Activated naive CD4-positive, alpha-beta T cell treated with anti-CD3 and anti-CD28 coated beads, Interleukin-2, amount 10 ng/mL, durations not matched to agents 7 days and 5 days (primary cell): ENCODE measurements at regions of chr3 and their contacts with region 1.

Region 1: GRCh38 chr3:111338059-111338698 is 203.8 kb upstream of the CD96 start:
- DNase-seq: peak; percentile 64
- H3K4me3 Mint-ChIP-seq: no peak overlapping the region
- H3K27ac Mint-ChIP-seq: no peak overlapping the region
- H3K4me1 Mint-ChIP-seq: peaks cover 23% of the 10 kb centered on the region
- H3K27me3 Mint-ChIP-seq: no peaks in the 10 kb centered on the region

Region 2: GRCh38 chr3:111080413-111080812 is 257.8 kb before region 1 on chr3:
- CTCF ChIA-PET with region 1: interaction called, 12 read pairs
- DNase-seq: no peak
- H3K4me3 Mint-ChIP-seq: no peak overlapping the region
- H3K27ac Mint-ChIP-seq: no peak overlapping the region
- H3K4me1 Mint-ChIP-seq: no peaks in the 10 kb centered on the region
- H3K27me3 Mint-ChIP-seq: no peaks in the 10 kb centered on the region

Region 3: GRCh38 chr3:111277226-111277625 is 61.0 kb before region 1 on chr3:
- CTCF ChIA-PET with region 1: interaction called, 20 read pairs
- DNase-seq: no peak
- H3K4me3 Mint-ChIP-seq: no peak overlapping the region
- H3K27ac Mint-ChIP-seq: no peak overlapping the region
- H3K4me1 Mint-ChIP-seq: peaks cover 10% of the 10 kb centered on the region
- H3K27me3 Mint-ChIP-seq: peaks cover 10% of the 10 kb centered on the region

Region 4: DNA sequence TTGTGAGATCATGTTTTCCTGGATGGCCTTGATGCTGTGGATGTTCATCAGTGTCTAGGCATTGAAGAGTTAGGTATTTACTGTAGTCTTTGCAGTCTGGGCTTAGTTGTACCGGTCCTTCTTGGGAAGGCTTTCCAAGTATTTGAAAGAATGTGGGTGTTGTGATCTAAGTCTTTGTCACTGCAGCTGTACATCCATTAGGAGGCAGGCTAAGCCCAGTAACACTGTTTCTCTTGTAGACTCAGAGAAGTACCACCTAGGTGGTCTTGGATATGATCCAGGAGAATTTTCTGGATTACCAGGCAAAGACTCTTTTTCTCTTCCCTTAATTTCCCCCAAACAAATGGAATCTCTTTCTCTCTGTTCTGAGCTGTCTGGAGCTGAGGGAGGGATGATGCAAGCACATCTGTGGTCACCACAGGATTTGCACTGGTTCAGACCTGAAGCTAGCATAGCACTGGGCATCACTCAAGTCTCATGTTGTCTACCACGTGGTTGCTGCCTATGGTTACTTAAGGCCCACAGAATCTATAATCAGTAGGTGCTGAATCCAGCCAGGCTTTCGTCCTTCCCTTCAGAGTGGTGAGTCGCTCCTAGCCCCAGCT is 39.0 kb before region 1 on chr3:
- CTCF ChIA-PET with region 1: interaction called, 20 read pairs
- DNase-seq: no peak
- H3K4me3 Mint-ChIP-seq: no peak overlapping the region
- H3K27ac Mint-ChIP-seq: no peak overlapping the region
- H3K4me1 Mint-ChIP-seq: peaks cover 23% of the 10 kb centered on the region
- H3K27me3 Mint-ChIP-seq: peaks cover 5% of the 10 kb centered on the region

Region 5: DNA sequence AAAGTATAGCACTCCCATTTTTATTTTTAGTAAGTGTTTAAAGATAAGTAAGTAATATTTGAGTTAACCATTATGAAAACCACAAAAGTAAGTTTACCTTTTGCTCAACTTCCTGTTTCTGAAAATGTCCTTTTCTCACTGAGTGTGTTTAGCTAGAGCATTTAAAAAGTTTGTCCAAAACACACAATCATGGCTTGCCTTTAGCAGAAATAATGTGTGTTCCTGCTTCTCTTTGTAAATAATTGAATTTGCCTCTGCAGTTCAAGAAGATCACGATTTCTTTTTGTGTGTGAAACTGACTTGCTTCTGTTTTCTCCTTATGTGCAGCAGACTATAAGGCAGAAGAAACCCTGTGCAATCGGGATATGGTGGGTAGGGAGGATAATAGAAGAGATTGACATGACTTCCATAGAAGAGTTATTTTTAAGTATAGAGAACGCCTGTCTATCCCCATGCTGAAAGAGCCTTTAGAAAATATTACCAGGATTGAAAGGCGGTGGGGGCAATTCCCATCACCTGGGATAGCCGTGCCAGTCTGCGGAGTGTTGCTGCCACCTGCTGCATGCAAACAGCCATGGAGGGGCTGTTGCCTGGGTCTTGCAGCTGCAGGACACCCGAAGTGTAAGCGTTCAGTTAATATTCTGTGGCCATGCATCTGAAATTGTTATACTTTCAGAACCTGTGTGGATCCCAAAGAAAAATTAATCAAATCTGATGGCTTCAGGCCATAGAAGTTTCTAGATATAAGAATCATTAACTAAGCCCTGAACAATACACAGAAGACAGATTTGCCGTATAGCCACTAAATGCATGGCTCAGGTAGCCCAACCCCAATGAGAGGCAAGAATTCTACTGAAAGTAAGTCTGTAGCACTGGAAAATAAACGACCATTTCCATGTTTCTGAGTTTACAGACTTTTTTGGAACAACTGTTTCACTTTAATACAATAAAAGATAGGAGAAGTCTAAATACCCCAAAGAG is 201.5 kb after region 1 on chr3:
- CTCF ChIA-PET with region 1: interaction called, 10 read pairs
- DNase-seq: peak; percentile 79
- H3K4me3 Mint-ChIP-seq: peak overlapping the region; percentile 64
- H3K27ac Mint-ChIP-seq: peak overlapping the region; percentile 90
- H3K4me1 Mint-ChIP-seq: peaks cover 54% of the 10 kb centered on the region
- H3K27me3 Mint-ChIP-seq: no peaks in the 10 kb centered on the region